MCF 10A (cell line): ENCODE measurements at regions of chr7 and their contacts with region 1.

Region 1: GRCh38 chr7:43729214-43729923 is at the start of gene COA1:
- DNase-seq: peak; percentile 89
- H3K4me3 Mint-ChIP-seq: peak within 1 kb of the TSS; percentile 87
- H3K27ac Mint-ChIP-seq: peak within 1 kb of the TSS; percentile 77
- H3K4me1 Mint-ChIP-seq: peaks cover 4% of the 10 kb centered on the region
- H3K27me3 Mint-ChIP-seq: no peaks in the 10 kb centered on the region
- CTCF ChIP-seq: no peak
- total RNA-seq, gene COA1: 65.5 and 68.5 TPM in 2 replicates

Region 2: GRCh38 chr7:43758029-43758821 is 28.9 kb after region 1 on chr7 and contains the start of gene BLVRA:
- CTCF ChIA-PET with region 1: interaction called, 4 read pairs
- POLR2A ChIA-PET with region 1: interaction called, 188 read pairs
- intact Hi-C with region 1: no loop called
- DNase-seq: peak; percentile 50
- H3K4me3 Mint-ChIP-seq: peak within 1 kb of the TSS; percentile 72
- H3K27ac Mint-ChIP-seq: peak within 1 kb of the TSS; percentile 83
- H3K4me1 Mint-ChIP-seq: peaks cover 41% of the 10 kb centered on the region
- H3K27me3 Mint-ChIP-seq: no peaks in the 10 kb centered on the region
- CTCF ChIP-seq: no peak
- total RNA-seq, gene BLVRA: 41.2 and 46.0 TPM in 2 replicates

Region 3: GRCh38 chr7:43779032-43779812 is 49.9 kb after region 1 on chr7:
- CTCF ChIA-PET with region 1: interaction called, 3 read pairs
- POLR2A ChIA-PET with region 1: interaction called, 40 read pairs
- intact Hi-C with region 1: no loop called
- DNase-seq: peak; percentile 56
- H3K4me3 Mint-ChIP-seq: peak overlapping the region; percentile 72
- H3K27ac Mint-ChIP-seq: peak overlapping the region; percentile 90
- H3K4me1 Mint-ChIP-seq: peaks cover 18% of the 10 kb centered on the region
- H3K27me3 Mint-ChIP-seq: no peaks in the 10 kb centered on the region
- CTCF ChIP-seq: no peak

Region 4: GRCh38 chr7:43784030-43785001 is 54.9 kb after region 1 on chr7:
- CTCF ChIA-PET with region 1: interaction called, 3 read pairs
- POLR2A ChIA-PET with region 1: interaction called, 40 read pairs
- intact Hi-C with region 1: no loop called
- DNase-seq: no peak
- H3K4me3 Mint-ChIP-seq: no peak overlapping the region
- H3K27ac Mint-ChIP-seq: no peak overlapping the region
- H3K4me1 Mint-ChIP-seq: peaks cover 24% of the 10 kb centered on the region
- H3K27me3 Mint-ChIP-seq: no peaks in the 10 kb centered on the region
- CTCF ChIP-seq: no peak

Region 5: GRCh38 chr7:43799589-43799988 is 70.2 kb after region 1 on chr7:
- CTCF ChIA-PET with region 1: no interaction called
- POLR2A ChIA-PET with region 1: interaction called, 3 read pairs
- intact Hi-C with region 1: loop called (anchors 5 kb)
- DNase-seq: peak; percentile 54
- H3K4me3 Mint-ChIP-seq: no peak overlapping the region
- H3K27ac Mint-ChIP-seq: peak overlapping the region; percentile 76
- H3K4me1 Mint-ChIP-seq: no peaks in the 10 kb centered on the region
- H3K27me3 Mint-ChIP-seq: no peaks in the 10 kb centered on the region
- CTCF ChIP-seq: no peak